Dendritic cell treated with granulocyte-macrophage colony-stimulating factor and Interleukin-4, amounts not matched to agents 40 ng/mL and 50 ng/mL, for 4 days (primary cell): ENCODE measurements at regions of chr12 and their contacts with region 1.

Region 1: DNA sequence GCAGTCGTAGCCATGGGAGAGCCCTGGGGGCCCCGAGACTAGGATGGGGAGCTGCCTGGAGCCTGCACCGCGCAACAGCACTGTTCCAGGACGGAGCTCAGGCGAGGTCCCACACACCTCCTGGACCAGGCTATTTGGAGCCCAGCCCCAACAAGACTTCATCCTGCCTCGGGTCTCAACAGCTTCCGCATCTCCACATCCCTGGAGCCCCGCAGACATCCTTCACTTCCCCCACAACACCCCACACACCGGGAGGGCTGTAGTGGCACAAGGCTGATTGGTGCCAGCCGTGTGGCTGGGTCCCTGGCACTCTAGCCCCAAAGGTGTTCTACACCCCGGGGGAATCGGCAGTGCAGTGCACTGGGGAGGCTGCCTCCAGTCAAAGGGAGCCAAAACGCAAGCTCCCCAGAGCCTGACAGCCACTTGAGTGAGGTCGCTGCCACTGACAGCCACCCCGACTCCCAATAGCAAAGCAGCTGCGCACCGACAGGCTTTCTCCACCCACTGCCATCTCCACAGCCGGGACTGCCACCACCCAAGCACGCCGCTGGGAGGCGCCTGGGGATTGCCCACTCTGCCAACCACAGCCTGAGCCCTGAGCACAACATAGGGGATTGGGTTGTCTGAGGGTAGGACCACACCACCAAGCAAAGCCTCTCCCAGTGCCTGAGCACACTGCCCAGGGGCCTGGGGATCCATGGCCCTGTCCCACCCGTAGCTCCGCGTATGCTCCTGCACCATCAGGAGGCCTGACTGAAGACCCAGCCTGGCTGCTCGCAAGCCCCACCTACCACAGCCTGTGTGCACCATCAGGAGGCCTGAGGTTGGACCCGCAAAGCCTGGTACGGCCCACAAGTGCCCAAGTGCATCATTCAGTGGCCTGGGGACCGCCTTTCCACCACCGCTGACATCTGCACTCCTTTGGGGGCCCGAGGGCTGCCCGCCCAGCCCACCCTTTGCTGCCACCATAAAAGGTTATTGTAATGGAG is 13.2 kb upstream of the KLRF1 start:
- H3K4me3 Mint-ChIP-seq: peak overlapping the region; percentile 73
- H3K27ac Mint-ChIP-seq: peak overlapping the region; percentile 75
- H3K4me1 Mint-ChIP-seq: peaks cover 28% of the 10 kb centered on the region
- H3K27me3 Mint-ChIP-seq: no peaks in the 10 kb centered on the region

Region 2: DNA sequence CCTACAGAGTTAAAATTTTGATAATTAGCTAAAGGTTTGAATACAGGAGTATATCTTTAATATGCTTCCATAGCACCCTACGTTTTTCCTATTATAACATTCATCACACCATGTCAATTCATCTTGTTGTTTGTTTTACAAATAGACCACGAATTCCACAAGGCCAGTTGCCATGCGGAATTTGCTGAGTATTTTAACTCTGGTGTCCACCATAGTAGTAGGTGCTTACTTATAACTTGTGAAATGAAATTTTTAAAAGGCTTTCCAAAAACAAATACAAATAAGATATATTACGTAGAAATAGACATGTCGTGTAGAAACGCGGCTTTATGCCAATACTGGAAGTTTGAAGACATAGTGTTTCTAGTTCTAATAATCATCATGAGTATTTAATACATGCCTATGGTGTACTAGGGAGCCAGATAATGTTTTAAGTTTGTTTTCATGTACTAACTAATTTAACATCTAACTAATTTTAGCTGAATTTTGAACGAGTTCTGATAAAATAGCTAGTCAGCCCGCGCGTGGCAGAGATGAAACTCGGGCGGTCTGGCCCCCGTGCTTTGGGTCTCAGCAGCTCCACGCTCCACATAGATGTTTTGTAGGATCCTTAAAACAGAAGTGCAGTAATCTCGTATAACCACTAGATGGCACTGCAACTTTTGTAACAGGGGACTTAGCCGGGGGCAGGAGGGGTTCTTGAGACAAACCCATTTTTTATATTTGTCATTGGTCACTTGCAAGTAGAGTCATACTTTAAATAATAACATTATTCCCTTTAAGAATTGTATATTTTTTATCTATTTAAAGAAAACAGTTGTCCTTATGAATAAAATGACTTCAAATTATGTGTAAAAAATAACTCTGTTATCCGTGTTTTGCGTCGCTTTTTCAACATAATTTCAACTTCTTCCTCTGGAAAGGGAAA is 63.6 kb before region 1 on chr12:
- intact Hi-C with region 1: loop called (anchors 2 kb)
- H3K4me3 Mint-ChIP-seq: no peak overlapping the region
- H3K27ac Mint-ChIP-seq: no peak overlapping the region
- H3K4me1 Mint-ChIP-seq: peaks cover 16% of the 10 kb centered on the region
- H3K27me3 Mint-ChIP-seq: no peaks in the 10 kb centered on the region

Region 3: GRCh38 chr12:9792961-9793617 is 21.0 kb before region 1 on chr12:
- intact Hi-C with region 1: no loop called
- H3K4me3 Mint-ChIP-seq: no peak overlapping the region
- H3K27ac Mint-ChIP-seq: no peak overlapping the region
- H3K4me1 Mint-ChIP-seq: peaks cover 46% of the 10 kb centered on the region
- H3K27me3 Mint-ChIP-seq: peaks cover 2% of the 10 kb centered on the region

Region 4: GRCh38 chr12:9869307-9870161 is 55.4 kb after region 1 on chr12 and contains the start of gene CLEC2B:
- intact Hi-C with region 1: loop called (anchors 5 kb)
- H3K4me3 Mint-ChIP-seq: peak within 1 kb of the TSS; percentile 85
- H3K27ac Mint-ChIP-seq: peak within 1 kb of the TSS; percentile 100
- H3K4me1 Mint-ChIP-seq: peaks cover 26% of the 10 kb centered on the region
- H3K27me3 Mint-ChIP-seq: no peaks in the 10 kb centered on the region

Region 5: GRCh38 chr12:9925708-9926393 is 111.7 kb after region 1 on chr12:
- intact Hi-C with region 1: loop called (anchors 1 kb)
- H3K4me3 Mint-ChIP-seq: peak overlapping the region; percentile 63
- H3K27ac Mint-ChIP-seq: peak overlapping the region; percentile 60
- H3K4me1 Mint-ChIP-seq: peaks cover 18% of the 10 kb centered on the region
- H3K27me3 Mint-ChIP-seq: no peaks in the 10 kb centered on the region

Region 6: GRCh38 chr12:9992296-9992695 is 178.2 kb after region 1 on chr12:
- intact Hi-C with region 1: loop called (anchors 10 kb)
- H3K4me3 Mint-ChIP-seq: peak overlapping the region; percentile 58
- H3K27ac Mint-ChIP-seq: peak overlapping the region; percentile 76
- H3K4me1 Mint-ChIP-seq: peaks cover 21% of the 10 kb centered on the region
- H3K27me3 Mint-ChIP-seq: no peaks in the 10 kb centered on the region